Thyroid gland (tissue), 4 donors: ENCODE measurements at regions of chr1 and their contacts with region 1.

Region 1: DNA sequence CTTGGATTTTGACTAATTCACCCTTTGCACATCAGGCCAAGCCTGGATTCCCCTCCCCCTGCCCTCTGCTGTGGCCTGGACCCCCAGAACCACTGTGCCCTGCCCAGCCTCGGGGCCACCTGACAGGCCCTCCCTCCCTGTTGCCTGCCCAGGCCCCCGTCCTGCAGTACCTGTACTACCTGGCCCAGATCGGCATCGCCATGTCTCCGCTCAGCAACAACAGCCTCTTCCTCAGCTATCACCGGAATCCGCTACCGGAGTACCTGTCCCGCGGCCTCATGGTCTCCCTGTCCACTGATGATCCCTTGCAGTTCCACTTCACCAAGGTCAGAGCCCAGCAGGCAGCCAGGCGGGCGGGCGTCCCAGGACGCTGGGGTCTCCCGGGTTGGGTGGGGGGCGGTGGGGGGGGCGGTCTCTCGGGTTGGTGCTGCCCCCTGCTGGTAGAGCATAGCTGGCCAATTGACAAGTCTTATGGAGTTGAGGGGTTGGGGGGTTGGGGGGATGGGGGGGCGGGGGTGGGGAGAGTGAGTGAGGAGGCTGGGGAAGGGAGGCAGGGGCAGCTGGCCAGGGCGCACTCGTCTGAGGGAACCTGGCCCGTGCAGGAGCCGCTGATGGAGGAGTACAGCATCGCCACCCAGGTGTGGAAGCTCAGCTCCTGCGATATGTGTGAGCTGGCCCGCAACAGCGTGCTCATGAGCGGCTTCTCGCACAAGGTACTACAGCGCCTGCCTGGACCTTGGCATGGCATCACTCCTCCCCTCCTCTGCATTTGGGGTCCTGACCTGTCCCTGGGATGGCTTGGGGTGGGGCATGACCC is 10.7 kb downstream of the AMPD2 start:
- DNase-seq: no peak
- H3K4me3 ChIP-seq: no peak overlapping the region
- H3K27ac ChIP-seq: no peak overlapping the region
- H3K4me1 ChIP-seq: no peaks in the 10 kb centered on the region
- H3K27me3 ChIP-seq: no peaks in the 10 kb centered on the region
- CTCF ChIP-seq: peak in 1 of 6 experiments; percentile 52
- POLR2A ChIP-seq: no peak

Region 2: GRCh38 chr1:109075531-109076490 is 554.5 kb before region 1 on chr1 and contains the start of gene TAF13:
- intact Hi-C with region 1: loop called (anchors 10 kb)
- DNase-seq: peak; percentile 93 to 95
- H3K4me3 ChIP-seq: peak within 1 kb of the TSS; percentile 24 to 68 (median 68)
- H3K27ac ChIP-seq: peak within 1 kb of the TSS; percentile 81 to 95 (median 92)
- H3K4me1 ChIP-seq: peaks cover 9 to 11% of the 10 kb centered on the region in 2 donors
- H3K27me3 ChIP-seq: no peaks in the 10 kb centered on the region
- CTCF ChIP-seq: peak in 4 of 6 experiments; percentile 13 to 55 (median 46)
- POLR2A ChIP-seq: peak in 1 of 2 donors; percentile 94
- total RNA-seq, gene TAF13: 25.6 to 47.1 (median 43.9) TPM

Region 3: DNA sequence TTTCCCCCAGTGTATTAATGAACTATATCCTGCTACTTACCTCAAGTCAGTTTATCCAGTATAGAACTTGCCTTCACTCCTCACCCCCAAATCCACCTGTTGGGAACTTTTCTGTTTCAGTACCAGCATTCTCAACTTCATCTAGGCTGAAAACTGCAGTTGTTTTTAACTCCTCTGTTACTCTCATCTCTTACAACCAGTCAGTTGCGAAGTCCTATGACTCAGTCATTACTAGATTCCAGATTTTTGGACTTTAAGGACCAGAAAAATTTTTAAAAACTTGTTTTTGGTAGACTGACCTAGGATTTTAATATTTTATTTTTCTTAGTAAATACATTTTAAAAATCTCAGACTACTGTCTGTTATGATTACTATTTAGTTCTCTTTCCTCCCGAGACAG is 73.7 kb before region 1 on chr1:
- intact Hi-C with region 1: no loop called
- DNase-seq: no peak
- H3K4me3 ChIP-seq: no peak overlapping the region
- H3K27ac ChIP-seq: no peak overlapping the region
- H3K4me1 ChIP-seq: peaks cover 7 to 16% of the 10 kb centered on the region in 2 donors
- H3K27me3 ChIP-seq: no peaks in the 10 kb centered on the region
- CTCF ChIP-seq: no peak
- POLR2A ChIP-seq: no peak